Activated naive CD4-positive, alpha-beta T cell treated with anti-CD3 and anti-CD28 coated beads for 36 hours (primary cell): ENCODE measurements at regions of chr3 and their contacts with region 1.

Region 1: GRCh38 chr3:71710906-71711494 is 14.2 kb downstream of the EIF4E3 start:
- DNase-seq: no peak
- H3K4me3 Mint-ChIP-seq: no peak overlapping the region
- H3K27ac Mint-ChIP-seq: no peak overlapping the region
- H3K4me1 Mint-ChIP-seq: peaks cover 50% of the 10 kb centered on the region
- H3K27me3 Mint-ChIP-seq: no peaks in the 10 kb centered on the region

Region 2: GRCh38 chr3:71859123-71859519 is 148.1 kb after region 1 on chr3:
- CTCF ChIA-PET with region 1: interaction called, 14 read pairs
- intact Hi-C with region 1: loop called (anchors 1 kb)
- DNase-seq: peak; percentile 38
- H3K4me3 Mint-ChIP-seq: no peak overlapping the region
- H3K27ac Mint-ChIP-seq: no peak overlapping the region
- H3K4me1 Mint-ChIP-seq: peaks cover 3% of the 10 kb centered on the region
- H3K27me3 Mint-ChIP-seq: peaks cover 9% of the 10 kb centered on the region